ENCODE measurements at regions of chr5 and their contacts with region 1.

Region 1: DNA sequence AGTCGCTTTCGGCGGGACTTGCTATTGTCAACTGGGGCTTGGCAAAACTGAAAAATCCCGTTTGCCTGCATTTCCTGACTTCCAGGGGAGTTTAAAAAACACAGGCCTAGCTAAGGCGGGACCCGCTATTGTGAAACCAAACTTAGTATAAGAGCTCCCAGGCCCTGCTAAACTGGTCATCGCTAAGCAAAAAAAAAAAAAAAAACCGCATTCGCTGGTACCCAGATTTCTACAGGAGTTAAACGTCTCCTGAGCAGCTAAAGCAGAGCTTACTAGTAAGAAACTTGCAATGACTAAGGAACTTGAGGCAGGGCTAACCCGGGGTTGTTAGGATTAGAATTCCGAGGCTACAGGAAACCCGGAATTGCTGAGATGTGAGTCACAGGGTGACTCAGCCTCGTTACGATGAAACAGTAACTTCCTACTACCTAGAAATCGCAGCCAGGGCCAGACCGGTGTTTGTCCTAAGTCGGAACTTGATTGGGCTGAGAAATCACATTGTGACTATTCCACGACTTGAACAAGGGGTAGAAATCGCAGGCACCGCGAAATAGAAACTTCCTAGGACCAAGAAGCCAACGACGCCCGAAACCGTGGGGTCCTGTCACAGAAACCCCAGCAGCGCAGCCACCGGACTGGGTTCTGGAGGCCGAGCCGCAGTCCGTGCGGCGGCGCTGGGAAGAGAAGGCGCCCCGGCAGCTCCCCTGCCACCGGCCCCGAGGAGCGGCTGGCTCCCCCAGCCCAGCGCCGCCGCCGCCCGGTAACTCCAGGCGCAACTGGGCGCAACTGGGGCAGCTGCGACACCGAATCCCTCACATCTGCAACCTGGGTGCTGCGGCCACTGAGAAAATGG is 89.5 kb downstream of the ANXA2R start:
- DNase-seq: peak; percentile 85
- ATAC-seq: peak; percentile 44
- H3K4me3 ChIP-seq: peak overlapping the region; percentile 67 to 92 (median 85)
- H3K4me3 Mint-ChIP-seq: peak overlapping the region; percentile 99
- H3K27ac ChIP-seq: peak overlapping the region; percentile 93 to 97
- H3K27ac Mint-ChIP-seq: peak overlapping the region; percentile 100
- H3K4me1 ChIP-seq: peaks cover 13 to 33% of the 10 kb centered on the region in 2 donors
- H3K4me1 Mint-ChIP-seq: peaks cover 33% of the 10 kb centered on the region
- H3K27me3 ChIP-seq: no peaks in the 10 kb centered on the region
- H3K27me3 Mint-ChIP-seq: no peaks in the 10 kb centered on the region
- CTCF ChIP-seq: no peak

Region 2: DNA sequence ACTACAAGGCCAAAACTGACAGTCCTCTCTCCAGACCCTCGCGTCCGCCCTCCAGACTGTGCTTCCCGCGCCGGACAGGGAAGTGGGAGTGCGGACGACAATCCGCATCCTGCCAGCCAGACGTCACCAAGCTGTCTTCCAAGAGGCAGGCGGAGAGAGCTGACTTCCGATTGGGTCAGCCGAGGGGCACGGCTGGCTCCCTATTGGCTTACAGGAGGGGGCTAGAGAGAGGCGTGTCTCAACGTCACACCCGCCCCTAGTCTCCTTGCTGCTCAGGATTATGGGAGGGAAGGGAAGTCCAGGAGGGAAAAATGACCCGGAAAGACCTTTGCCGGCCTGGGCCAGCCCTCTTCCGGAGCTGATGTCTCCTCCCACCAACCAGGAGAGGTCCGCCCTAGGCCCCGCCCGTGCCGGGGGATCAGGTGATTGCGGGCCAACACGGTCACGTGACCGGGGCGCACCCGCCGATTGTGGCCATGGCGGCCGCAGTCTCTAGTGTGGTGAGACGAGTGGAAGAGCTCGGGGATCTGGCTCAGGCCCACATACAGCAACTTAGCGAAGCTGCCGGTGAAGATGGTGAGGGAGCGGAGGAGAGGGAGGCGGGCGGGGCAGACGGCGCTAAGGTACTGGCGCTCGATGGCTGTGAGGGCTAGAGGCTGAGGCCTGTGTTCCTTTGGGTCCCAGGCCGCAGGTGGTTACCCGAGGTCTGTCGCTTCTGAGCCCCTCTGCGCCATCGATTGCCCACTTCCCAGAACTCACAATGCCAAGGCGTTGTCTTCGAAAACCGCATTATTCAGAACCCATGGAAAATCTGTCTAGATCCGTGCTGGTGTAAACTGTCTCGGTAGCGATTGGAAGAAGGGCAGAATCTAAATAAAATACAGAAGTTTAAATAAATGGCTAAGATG is 1046.5 kb before region 1 on chr5 and contains the start of gene RIMOC1:
- CTCF ChIA-PET with region 1: no interaction called
- POLR2A ChIA-PET with region 1: no interaction called
- intact Hi-C with region 1: loop called (anchors 1 kb)
- DNase-seq: peak; percentile 98
- ATAC-seq: peak; percentile 89
- H3K4me3 ChIP-seq: peak within 1 kb of the TSS; percentile 34 to 90 (median 80)
- H3K4me3 Mint-ChIP-seq: peak within 1 kb of the TSS; percentile 96
- H3K27ac ChIP-seq: peak within 1 kb of the TSS; percentile 89 to 98
- H3K27ac Mint-ChIP-seq: peak within 1 kb of the TSS; percentile 98
- H3K4me1 ChIP-seq: peaks cover 15 to 17% of the 10 kb centered on the region in 2 donors
- H3K4me1 Mint-ChIP-seq: peaks cover 34% of the 10 kb centered on the region
- H3K27me3 ChIP-seq: peaks cover 0 to 3% (median 1%) of the 10 kb centered on the region in 4 experiments
- H3K27me3 Mint-ChIP-seq: peaks cover 8% of the 10 kb centered on the region
- CTCF ChIP-seq: no peak
- total RNA-seq, gene RIMOC1: 32.1 and 33.1 TPM in 2 replicates

Region 3: DNA sequence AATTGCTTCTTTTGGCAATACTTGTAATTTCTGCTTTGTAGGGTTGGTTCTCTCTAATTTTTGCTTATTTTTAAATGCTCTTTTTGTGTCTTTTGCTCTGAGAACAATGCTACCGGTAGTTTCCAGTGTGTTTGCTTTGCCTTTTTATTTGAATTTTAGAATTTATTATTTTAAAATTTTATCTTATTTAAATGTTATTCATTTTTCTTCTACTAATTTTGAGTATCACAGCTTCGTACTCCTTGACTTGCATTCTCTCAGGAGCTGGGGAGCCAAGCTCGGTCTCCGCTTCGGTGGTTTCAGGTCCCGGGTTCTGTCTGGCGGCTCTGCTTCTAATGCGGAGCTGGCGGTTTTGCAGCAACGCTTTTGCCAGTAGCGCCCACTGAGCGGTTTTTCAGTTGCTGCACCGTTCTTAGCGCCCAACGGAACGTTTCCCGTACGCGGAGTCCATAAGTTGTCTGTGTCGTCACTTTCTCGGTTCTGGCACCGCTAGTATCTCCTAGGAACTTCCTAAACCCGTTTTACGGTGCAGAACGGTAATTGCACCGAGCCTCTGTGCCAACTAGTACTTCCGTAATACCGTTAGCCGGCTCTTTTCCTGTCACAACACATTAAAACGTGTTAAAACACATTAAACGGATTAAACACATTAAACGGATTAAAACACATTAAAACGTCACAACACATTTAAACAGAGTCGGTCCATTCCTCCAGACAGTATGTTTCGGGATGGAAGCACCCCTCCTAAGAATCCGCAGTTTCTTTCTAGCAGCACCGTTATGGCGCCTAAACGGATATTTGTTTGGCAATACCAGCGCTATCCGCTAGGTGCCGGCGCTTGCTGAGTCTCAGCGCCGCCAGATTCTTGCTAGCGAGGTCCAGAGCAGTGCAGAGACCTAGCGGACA is 43.8 kb after region 1 on chr5:
- CTCF ChIA-PET with region 1: interaction called, 48 read pairs
- POLR2A ChIA-PET with region 1: interaction called, 123 read pairs
- intact Hi-C with region 1: loop called (anchors 1 kb)
- DNase-seq: peak; percentile 94
- ATAC-seq: peak; percentile 67
- H3K4me3 ChIP-seq: peak overlapping the region; percentile 78 to 97 (median 89)
- H3K4me3 Mint-ChIP-seq: peak overlapping the region; percentile 96
- H3K27ac ChIP-seq: peak overlapping the region; percentile 93 to 96
- H3K27ac Mint-ChIP-seq: peak overlapping the region; percentile 100
- H3K4me1 ChIP-seq: peaks cover 23 to 30% of the 10 kb centered on the region in 2 donors
- H3K4me1 Mint-ChIP-seq: peaks cover 32% of the 10 kb centered on the region
- H3K27me3 ChIP-seq: peaks cover 0 to 9% (median 1%) of the 10 kb centered on the region in 4 experiments
- H3K27me3 Mint-ChIP-seq: no peaks in the 10 kb centered on the region
- CTCF ChIP-seq: peak; percentile 84

Region 4: DNA sequence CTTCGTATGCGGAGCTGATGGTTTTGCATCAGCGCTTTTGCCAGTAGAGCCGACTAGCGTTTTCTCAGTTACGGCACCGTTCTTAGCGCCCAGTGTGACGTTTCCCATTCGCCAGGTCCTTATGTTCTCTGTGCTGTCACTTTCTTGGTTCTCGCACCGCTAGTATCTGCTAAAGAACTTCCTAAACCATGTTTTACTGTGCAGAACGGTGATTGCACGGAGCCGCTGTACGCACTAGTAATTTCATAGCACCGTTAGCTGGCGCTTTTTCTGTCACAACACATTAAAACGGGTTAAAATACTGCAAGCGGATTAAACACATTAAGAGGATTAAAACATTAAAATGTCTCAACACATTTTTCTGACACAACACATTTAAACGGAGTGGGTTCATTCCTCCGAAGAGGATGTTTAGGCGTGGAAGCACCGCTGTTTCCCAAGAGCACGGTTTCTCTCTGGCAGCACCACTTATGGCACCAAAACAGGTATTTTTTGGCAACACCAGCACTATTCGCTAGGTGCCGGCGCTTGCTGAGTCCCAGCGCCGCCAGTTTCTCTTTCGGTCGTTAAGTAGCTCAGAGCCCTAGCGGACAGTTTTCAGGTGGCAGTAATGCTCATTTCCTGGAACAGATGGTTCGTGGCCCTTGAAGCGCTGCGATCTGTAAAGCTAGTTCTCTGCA is 69.1 kb after region 1 on chr5:
- CTCF ChIA-PET with region 1: interaction called, 47 read pairs
- POLR2A ChIA-PET with region 1: interaction called, 42 read pairs
- intact Hi-C with region 1: loop called (anchors 1 kb)
- DNase-seq: peak; percentile 94
- ATAC-seq: peak; percentile 63
- H3K4me3 ChIP-seq: peak overlapping the region; percentile 63 to 99 (median 80)
- H3K4me3 Mint-ChIP-seq: peak overlapping the region; percentile 99
- H3K27ac ChIP-seq: peak overlapping the region; percentile 96 to 98
- H3K27ac Mint-ChIP-seq: peak overlapping the region; percentile 100
- H3K4me1 ChIP-seq: peaks cover 25 to 32% of the 10 kb centered on the region in 2 donors
- H3K4me1 Mint-ChIP-seq: peaks cover 42% of the 10 kb centered on the region
- H3K27me3 ChIP-seq: no peaks in the 10 kb centered on the region
- H3K27me3 Mint-ChIP-seq: no peaks in the 10 kb centered on the region
- CTCF ChIP-seq: peak; percentile 77

Region 5: GRCh38 chr5:43105369-43106289 is 155.0 kb after region 1 on chr5:
- CTCF ChIA-PET with region 1: interaction called, 5 read pairs
- POLR2A ChIA-PET with region 1: no interaction called
- intact Hi-C with region 1: loop called (anchors 1 kb)
- DNase-seq: peak; percentile 94
- ATAC-seq: peak; percentile 97
- H3K4me3 ChIP-seq: peak overlapping the region; percentile 58 to 85 (median 66)
- H3K4me3 Mint-ChIP-seq: peak overlapping the region; percentile 90
- H3K27ac ChIP-seq: peak overlapping the region; percentile 49 to 71
- H3K27ac Mint-ChIP-seq: peak overlapping the region; percentile 83
- H3K4me1 ChIP-seq: peaks cover 0 to 12% of the 10 kb centered on the region in 2 donors
- H3K4me1 Mint-ChIP-seq: peaks cover 11% of the 10 kb centered on the region
- H3K27me3 ChIP-seq: no peaks in the 10 kb centered on the region
- H3K27me3 Mint-ChIP-seq: no peaks in the 10 kb centered on the region
- CTCF ChIP-seq: peak; percentile 100

Region 6: GRCh38 chr5:43602461-43603343 is 652.0 kb after region 1 on chr5 and contains the start of gene NNT:
- CTCF ChIA-PET with region 1: no interaction called
- POLR2A ChIA-PET with region 1: interaction called, 4 read pairs
- intact Hi-C with region 1: loop called (anchors 2 kb)
- DNase-seq: peak; percentile 83
- ATAC-seq: peak; percentile 71
- H3K4me3 ChIP-seq: peak within 1 kb of the TSS; percentile 65 to 99 (median 80)
- H3K4me3 Mint-ChIP-seq: peak within 1 kb of the TSS; percentile 95
- H3K27ac ChIP-seq: peak within 1 kb of the TSS; percentile 75 to 89
- H3K27ac Mint-ChIP-seq: peak within 1 kb of the TSS; percentile 91
- H3K4me1 ChIP-seq: peaks cover 16 to 24% of the 10 kb centered on the region in 2 donors
- H3K4me1 Mint-ChIP-seq: peaks cover 34% of the 10 kb centered on the region
- H3K27me3 ChIP-seq: no peaks in the 10 kb centered on the region
- H3K27me3 Mint-ChIP-seq: no peaks in the 10 kb centered on the region
- CTCF ChIP-seq: no peak
- total RNA-seq, gene NNT: 61.1 and 63.0 TPM in 2 replicates